ENCODE measurements at regions of chr6 and their contacts with region 1.

Region 1: GRCh38 chr6:110826236-110827129 is 11.2 kb upstream of the CDK19 start:
- DNase-seq: no peak
- H3K4me3 ChIP-seq: no peak overlapping the region
- H3K27ac ChIP-seq: peak overlapping the region; percentile 17 to 50 (median 28)
- H3K4me1 ChIP-seq: peaks cover 0 to 14% (median 2%) of the 10 kb centered on the region in 4 donors
- H3K27me3 ChIP-seq: no peaks in the 10 kb centered on the region
- CTCF ChIP-seq: no peak
- EP300 ChIP-seq: no peak
- POLR2A ChIP-seq: no peak

Region 2: DNA sequence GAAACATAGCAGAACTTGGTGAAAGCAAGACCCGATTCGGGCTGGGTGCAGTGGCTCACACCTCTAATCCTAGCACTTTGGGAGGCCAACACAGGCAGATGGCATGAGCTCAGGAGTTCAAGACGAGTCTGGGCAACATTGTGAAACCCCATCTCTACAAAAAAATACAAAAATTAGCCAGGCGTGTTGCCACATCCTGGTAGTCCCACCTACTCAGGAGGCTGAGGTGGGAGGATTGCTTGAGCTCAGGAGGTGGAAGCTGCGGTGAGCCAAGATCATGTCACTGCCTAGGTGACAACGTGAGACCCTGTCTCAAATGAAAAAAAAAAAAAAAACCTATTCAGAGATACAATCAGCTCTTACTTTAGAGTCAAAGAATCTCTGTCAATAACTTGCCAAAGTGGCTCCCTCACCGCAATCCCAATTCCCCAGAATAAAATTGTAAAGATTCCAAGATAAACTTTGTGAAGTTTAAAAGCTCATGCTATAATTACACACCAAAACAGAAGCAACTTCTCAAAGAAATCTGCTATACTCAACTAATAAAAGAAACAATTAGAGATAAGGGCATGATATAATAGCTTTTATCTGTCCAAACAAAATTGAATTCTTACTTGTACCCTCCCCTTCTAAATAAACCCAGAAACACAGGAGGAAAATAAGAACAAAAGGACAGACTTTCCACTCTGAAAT is 44.8 kb before region 1 on chr6:
- in situ Hi-C with region 1: no loop called
- intact Hi-C with region 1: no loop called
- DNase-seq: no peak
- H3K4me3 ChIP-seq: no peak overlapping the region
- H3K27ac ChIP-seq: no peak overlapping the region
- H3K4me1 ChIP-seq: peaks cover 0 to 4% (median 0%) of the 10 kb centered on the region in 4 donors
- H3K27me3 ChIP-seq: no peaks in the 10 kb centered on the region
- CTCF ChIP-seq: no peak
- EP300 ChIP-seq: no peak
- POLR2A ChIP-seq: no peak

Region 3: DNA sequence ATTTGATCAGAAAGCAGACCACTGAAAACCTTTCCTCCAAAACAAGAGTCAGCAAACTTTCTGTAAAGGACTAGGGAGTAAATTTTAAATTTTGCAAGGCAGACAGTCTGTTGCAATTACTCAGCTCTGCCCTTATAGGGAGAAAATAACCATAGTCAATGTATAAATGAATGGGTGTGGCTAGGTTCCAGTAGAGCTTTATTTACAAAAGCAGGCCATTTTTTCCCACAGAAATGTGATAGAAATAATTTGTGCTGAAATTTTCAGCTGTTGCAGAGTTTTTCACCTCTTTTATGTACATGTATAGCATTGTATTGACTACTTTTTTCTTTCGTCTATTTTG is 55.8 kb after region 1 on chr6:
- in situ Hi-C with region 1: loop called in 1 of 4 experiments (anchors 10 kb)
- intact Hi-C with region 1: no loop called
- DNase-seq: no peak
- H3K4me3 ChIP-seq: no peak overlapping the region
- H3K27ac ChIP-seq: no peak overlapping the region
- H3K4me1 ChIP-seq: peaks cover 28 to 83% (median 57%) of the 10 kb centered on the region in 4 donors
- H3K27me3 ChIP-seq: no peaks in the 10 kb centered on the region
- CTCF ChIP-seq: no peak
- EP300 ChIP-seq: no peak
- POLR2A ChIP-seq: no peak